ENCODE measurements at regions of chr13 and their contacts with region 1.

Region 1: GRCh38 chr13:112873851-112874750 is 94.9 kb upstream of the MCF2L start:
- DNase-seq: peak; percentile 76 to 87 (median 78)
- ATAC-seq: peak; percentile 54 to 89 (median 84)
- H3K4me3 ChIP-seq: peak overlapping the region in 2 of 12 donors; percentile 21 to 32
- H3K27ac ChIP-seq: peak overlapping the region in 9 of 12 donors; percentile 6 to 55 (median 29)
- H3K4me1 ChIP-seq: peaks cover 0 to 15% (median 5%) of the 10 kb centered on the region in 12 donors
- H3K27me3 ChIP-seq: no peaks in the 10 kb centered on the region
- CTCF ChIP-seq: peak; percentile 90 to 97 (median 94)
- POLR2A ChIP-seq: no peak

Region 2: GRCh38 chr13:112638157-112638750 is 235.8 kb before region 1 on chr13:
- intact Hi-C with region 1: loop called in 9 of 10 experiments (anchors 1 to 10 kb)
- DNase-seq: no peak
- ATAC-seq: no peak
- H3K4me3 ChIP-seq: no peak overlapping the region
- H3K27ac ChIP-seq: no peak overlapping the region
- H3K4me1 ChIP-seq: peaks cover 0 to 18% (median 0%) of the 10 kb centered on the region in 12 donors
- H3K27me3 ChIP-seq: peaks cover 2 to 56% (median 17%) of the 10 kb centered on the region in 9 donors
- CTCF ChIP-seq: no peak
- POLR2A ChIP-seq: no peak